ENCODE measurements at regions of chr5 and their contacts with region 1.

Region 1: DNA sequence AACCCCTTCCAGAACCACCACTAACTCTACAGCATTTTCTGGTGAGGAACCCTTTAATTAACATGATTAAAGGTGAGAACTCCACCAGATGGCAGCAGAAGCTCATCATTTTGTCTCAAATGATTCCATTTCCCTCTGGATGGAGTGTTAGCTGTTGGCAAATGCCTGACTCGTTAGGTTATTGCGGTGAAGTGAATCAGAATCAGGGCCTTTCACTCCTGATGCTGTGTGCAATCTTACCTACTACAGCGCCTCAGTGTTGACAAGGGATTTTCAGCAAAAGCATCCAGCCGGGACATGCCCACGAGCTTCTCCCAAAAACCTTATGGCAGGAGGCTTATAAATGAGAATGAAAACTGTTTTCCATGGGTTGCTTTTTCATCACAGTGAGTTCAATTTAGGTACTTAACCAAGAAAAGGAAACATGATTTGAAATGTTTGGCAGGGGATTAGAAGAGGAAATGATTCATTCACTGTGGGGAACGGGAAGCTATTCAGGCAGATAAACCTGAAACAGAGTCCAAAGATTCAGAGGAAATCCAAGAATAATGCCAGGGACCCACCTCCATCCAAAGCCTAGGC is 48.0 kb upstream of the CAST start:
- DNase-seq: peak; percentile 62 to 77 (median 63)
- ATAC-seq: peak; percentile 81
- H3K4me3 ChIP-seq: no peak overlapping the region
- H3K27ac ChIP-seq: peak overlapping the region in 2 of 4 donors; percentile 10 to 49
- H3K4me1 ChIP-seq: peaks cover 6% of the 10 kb centered on the region
- H3K27me3 ChIP-seq: no peaks in the 10 kb centered on the region
- CTCF ChIP-seq: peak; percentile 19 to 82 (median 68)
- POLR2A ChIP-seq: no peak

Region 2: GRCh38 chr5:96687812-96688453 is 73.7 kb after region 1 on chr5:
- intact Hi-C with region 1: loop called (anchors 10 kb)
- DNase-seq: no peak
- ATAC-seq: peak; percentile 73
- H3K4me3 ChIP-seq: no peak overlapping the region
- H3K27ac ChIP-seq: no peak overlapping the region
- H3K4me1 ChIP-seq: no peaks in the 10 kb centered on the region
- H3K27me3 ChIP-seq: no peaks in the 10 kb centered on the region
- CTCF ChIP-seq: peak in 6 of 7 experiments; percentile 48 to 78 (median 64)
- POLR2A ChIP-seq: no peak

Measured in body of pancreas (tissue), 4 donors.